ENCODE measurements at regions of chr11 and their contacts with region 1.

Region 1: DNA sequence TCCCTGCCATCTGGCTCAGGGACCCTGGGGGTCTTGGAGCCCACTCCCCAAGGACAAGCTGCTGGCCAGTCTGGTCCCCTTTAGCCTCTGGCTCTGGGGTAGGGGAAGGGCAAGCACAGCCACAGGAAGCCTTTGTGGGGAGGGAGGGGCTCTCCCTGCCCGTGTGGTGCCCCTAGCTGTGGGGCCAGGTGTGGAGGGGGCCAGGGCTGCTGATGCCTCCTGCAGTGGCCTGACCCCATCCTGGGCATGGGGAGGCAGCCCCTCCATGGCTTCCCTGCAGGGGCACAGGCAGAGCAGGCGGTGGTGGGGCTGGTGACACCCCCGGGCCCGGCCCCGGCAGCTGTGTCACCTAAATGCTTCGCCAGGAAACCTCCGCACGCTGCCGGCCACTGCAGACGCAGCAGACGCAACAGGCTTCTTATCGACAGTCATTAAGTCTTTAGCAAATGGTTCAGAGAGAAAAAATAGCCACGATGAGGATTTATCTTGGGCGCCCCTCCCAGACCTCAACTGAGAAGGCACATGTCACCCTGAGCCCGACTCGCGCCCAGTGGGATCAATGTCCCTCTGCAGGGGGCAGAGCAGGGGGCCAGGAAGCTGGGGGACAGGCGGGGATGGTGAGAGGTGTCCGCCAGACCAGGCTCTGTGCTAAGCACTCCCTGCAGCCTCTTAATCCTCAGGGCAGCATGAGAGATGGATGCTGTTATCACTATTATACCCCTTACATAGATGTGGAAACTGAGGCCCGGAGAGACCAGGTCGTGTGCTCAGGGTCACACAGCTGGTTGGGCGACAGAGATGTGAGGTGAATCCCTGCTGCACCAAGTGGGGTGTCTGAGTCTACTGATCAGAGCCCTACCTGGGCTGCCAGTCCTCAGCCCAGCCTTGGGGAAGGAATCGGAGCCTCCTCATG is 33.9 kb downstream of the FLRT1 start:
- DNase-seq: no peak

Region 2: DNA sequence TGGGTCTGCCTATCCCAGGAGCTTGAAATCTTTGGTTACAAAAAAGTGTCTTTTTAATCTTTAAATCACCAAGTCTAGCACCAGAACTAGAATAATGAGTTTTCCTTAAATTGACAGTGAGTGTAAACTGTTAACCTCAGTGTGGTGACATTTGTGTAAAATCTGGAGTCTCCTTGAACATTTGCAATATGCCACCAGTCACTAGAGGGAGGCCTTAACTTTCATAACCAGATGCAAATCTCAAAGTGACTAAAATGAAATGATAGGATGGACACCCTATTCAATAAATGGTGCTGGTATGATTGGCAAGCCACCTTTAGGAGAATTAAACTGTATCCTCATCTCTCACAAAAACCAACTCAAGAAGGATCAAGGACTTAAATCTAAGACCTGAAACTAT is 1835.9 kb before region 1 on chr11:
- intact Hi-C with region 1: no loop called
- DNase-seq: no peak

Region 3: DNA sequence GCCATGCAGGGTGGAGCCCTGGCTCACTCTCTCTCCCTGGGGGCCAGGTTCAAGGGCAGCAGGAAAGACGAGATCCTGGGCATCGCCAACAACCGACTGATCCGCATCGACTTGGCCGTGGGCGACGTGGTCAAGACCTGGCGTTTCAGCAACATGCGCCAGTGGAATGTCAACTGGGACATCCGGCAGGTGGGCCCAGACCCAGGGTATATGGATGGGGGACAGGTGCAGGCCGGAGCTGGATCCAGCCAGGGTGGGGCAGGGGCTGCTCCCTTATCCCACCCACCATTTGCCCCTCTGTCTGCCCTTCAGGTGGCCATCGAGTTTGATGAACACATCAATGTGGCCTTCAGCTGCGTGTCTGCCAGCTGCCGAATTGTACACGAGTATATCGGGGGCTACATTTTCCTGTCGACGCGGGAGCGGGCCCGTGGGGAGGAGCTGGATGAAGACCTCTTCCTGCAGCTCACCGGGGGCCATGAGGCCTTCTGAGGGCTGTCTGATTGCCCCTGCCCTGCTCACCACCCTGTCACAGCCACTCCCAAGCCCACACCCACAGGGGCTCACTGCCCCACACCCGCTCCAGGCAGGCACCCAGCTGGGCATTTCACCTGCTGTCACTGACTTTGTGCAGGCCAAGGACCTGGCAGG is 153.5 kb after region 1 on chr11:
- intact Hi-C with region 1: loop called in 1 of 2 experiments (anchors 2 kb)
- DNase-seq: peak; percentile 72

Region 4: GRCh38 chr11:64558111-64558916 is 488.7 kb after region 1 on chr11:
- intact Hi-C with region 1: no loop called
- DNase-seq: peak; percentile 72

Measured in posterior vena cava (tissue), 2 donors.